ENCODE measurements at regions of chr5 and their contacts with region 1.

Region 1: DNA sequence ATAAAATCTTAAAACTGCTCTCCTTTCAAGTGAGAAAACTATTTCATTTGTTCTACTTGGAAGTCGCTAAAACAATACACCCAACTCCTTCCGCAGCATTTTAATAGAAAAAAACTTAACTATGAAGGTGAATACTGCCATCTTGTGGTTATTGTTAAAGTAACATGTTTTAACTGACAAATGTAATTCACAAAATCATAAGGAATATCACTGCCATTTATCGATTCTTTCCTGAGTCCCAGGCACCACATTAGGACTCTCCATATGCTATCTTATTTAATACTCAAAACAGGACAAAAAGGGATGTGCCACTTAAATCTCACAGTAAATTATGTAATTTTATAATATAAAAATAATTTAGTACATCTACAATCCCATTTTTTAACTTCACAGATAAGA is 130.5 kb upstream of the ITGA1 start:
- DNase-seq: peak in 2 of 3 donors; percentile 7 to 31
- H3K4me3 ChIP-seq: no peak overlapping the region
- H3K4me3 Mint-ChIP-seq: no peak overlapping the region
- H3K27ac ChIP-seq: no peak overlapping the region
- H3K27ac Mint-ChIP-seq: no peak overlapping the region
- H3K4me1 ChIP-seq: no peaks in the 10 kb centered on the region
- H3K4me1 Mint-ChIP-seq: no peaks in the 10 kb centered on the region
- H3K27me3 ChIP-seq: peaks cover 6 to 7% of the 10 kb centered on the region in 2 donors
- H3K27me3 Mint-ChIP-seq: peaks cover 1 to 7% (median 4%) of the 10 kb centered on the region in 3 donors
- CTCF ChIP-seq: peak; percentile 70

Region 2: DNA sequence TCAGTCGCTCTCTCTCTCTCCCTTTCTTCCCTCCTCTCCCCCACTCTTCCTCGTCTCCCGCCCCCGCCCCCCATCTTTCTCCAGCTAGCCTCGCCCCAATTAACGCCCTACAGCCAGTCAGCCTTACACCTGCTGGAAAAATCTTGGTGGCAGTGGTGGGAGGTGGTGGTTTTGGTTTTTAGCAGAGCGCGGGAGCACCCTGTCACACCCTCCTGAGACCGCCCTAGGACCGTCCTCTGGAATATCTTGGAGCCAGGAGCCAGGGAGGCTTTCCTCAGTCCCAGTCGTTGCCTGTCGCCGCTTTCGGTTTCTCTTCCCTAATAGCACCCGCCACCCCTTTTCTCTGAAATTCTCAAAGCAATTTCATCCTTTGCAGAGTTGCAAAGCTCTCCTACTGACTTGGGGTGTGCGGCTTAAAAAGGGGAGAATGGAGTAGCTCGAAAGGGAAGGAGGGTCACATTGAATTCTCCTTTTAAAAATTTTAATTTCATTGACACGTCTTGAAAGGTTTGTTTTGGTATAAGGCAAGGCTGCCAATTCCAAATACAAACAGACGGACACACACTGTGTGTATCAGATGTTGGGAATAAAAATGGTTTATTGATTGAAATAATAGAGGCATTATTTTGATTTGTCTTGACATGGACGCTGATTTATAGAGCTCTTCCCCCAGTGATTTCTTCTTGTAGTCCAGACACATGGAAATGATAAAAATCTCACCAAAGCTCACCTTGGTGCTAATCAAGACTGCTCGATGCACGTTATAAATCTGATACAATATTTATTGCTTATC is 1689.5 kb before region 1 on chr5:
- intact Hi-C with region 1: loop called in 1 of 2 experiments (anchors 5 kb)
- DNase-seq: peak; percentile 7 to 20 (median 19)
- H3K4me3 ChIP-seq: peak overlapping the region; percentile 28 to 76 (median 44)
- H3K4me3 Mint-ChIP-seq: peak overlapping the region; percentile 84 to 97
- H3K27ac ChIP-seq: no peak overlapping the region
- H3K27ac Mint-ChIP-seq: peak overlapping the region in 2 of 7 donors; percentile 12 to 58
- H3K4me1 ChIP-seq: peaks cover 45 to 52% of the 10 kb centered on the region in 2 donors
- H3K4me1 Mint-ChIP-seq: peaks cover 55% of the 10 kb centered on the region
- H3K27me3 ChIP-seq: peaks cover 85 to 92% of the 10 kb centered on the region in 2 donors
- H3K27me3 Mint-ChIP-seq: peaks cover 89 to 96% (median 91%) of the 10 kb centered on the region in 3 donors
- CTCF ChIP-seq: no peak

Region 3: GRCh38 chr5:52564587-52564986 is 92.7 kb before region 1 on chr5:
- intact Hi-C with region 1: no loop called
- DNase-seq: no peak
- H3K4me3 ChIP-seq: no peak overlapping the region
- H3K4me3 Mint-ChIP-seq: no peak overlapping the region
- H3K27ac ChIP-seq: no peak overlapping the region
- H3K27ac Mint-ChIP-seq: no peak overlapping the region
- H3K4me1 ChIP-seq: no peaks in the 10 kb centered on the region
- H3K4me1 Mint-ChIP-seq: no peaks in the 10 kb centered on the region
- H3K27me3 ChIP-seq: no peaks in the 10 kb centered on the region
- H3K27me3 Mint-ChIP-seq: peaks cover 0 to 2% (median under 1%) of the 10 kb centered on the region in 3 donors
- CTCF ChIP-seq: no peak

Measured in CD14-positive monocyte (primary cell).